AG04449 (cell line): ENCODE measurements at regions of chr1 and their contacts with region 1.

Region 1: DNA sequence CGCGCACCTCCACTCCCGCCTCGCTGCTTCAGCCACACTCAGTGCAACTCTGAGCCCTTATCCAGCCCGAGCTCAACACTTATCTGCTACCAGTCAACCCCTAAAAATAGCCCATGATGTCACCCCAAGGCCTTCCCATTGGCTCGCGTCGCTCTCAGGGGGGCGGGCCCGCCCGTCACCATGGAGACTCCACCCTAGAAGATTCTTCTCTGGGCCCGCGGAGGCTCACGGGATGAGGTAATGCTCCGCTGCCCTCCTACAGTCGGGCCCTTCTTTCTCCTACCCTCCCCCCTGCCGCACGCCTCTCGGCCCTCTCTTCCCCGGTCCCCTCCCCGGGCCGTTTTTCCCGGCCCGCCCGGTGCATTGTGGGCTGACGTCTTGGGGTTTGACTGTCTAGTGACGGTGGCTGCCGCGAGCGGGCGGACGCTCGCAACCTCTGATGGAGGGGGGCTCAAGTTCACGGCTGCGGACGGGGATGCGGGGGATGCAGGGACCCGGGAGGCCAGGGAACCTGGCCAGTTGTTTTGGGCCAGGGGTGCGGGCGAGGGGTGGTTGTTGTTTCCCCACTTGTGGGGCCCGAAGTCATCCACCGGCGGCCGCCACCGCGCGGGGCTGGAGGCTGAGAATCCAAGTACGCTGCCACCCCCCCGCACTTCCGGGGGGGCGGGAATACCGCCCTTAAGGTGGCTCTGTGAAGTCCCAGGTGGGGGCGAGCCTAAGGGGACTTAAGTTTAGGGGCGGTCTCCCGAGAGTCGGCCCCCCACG is at the start of gene JUN:
- DNase-seq: peak; percentile 98
- H3K4me3 ChIP-seq: peak within 1 kb of the TSS; percentile 95
- CTCF ChIP-seq: no peak

Region 2: GRCh38 chr1:58768971-58769808 is 15.0 kb before region 1 on chr1:
- CTCF ChIA-PET with region 1: interaction called, 32 read pairs
- POLR2A ChIA-PET with region 1: interaction called, 13 read pairs
- DNase-seq: no peak
- H3K4me3 ChIP-seq: no peak overlapping the region
- CTCF ChIP-seq: peak; percentile 76

Region 3: DNA sequence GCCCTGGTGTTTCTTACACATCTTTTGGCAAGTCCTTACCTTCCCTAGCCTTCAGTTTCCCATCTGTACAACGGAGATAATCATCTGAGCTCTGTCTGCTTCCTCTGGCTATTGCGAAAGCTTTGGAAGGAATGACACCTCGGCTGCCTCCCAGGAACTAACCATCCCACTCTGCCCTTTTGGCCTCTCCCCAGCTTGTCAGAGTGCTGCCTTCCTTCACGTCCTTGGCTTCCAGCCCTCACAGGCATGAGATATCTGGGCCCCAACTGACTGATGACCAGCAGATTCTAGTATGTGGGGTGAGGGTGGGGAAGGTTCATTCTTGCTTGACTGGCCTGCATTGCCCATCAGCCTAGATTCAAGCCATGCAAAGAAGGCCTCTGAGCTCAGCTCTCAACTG is 259.6 kb after region 1 on chr1:
- CTCF ChIA-PET with region 1: interaction called, 15 read pairs
- POLR2A ChIA-PET with region 1: interaction called, 8 read pairs
- DNase-seq: peak; percentile 92
- H3K4me3 ChIP-seq: no peak overlapping the region
- CTCF ChIP-seq: no peak

Region 4: GRCh38 chr1:59150577-59151391 is 366.6 kb after region 1 on chr1:
- CTCF ChIA-PET with region 1: interaction called, 3 read pairs
- POLR2A ChIA-PET with region 1: interaction called, 14 read pairs
- DNase-seq: peak; percentile 98
- H3K4me3 ChIP-seq: peak overlapping the region; percentile 44
- CTCF ChIP-seq: no peak